B cell (primary cell): ENCODE measurements at regions of chr2 and their contacts with region 1.

Region 1: DNA sequence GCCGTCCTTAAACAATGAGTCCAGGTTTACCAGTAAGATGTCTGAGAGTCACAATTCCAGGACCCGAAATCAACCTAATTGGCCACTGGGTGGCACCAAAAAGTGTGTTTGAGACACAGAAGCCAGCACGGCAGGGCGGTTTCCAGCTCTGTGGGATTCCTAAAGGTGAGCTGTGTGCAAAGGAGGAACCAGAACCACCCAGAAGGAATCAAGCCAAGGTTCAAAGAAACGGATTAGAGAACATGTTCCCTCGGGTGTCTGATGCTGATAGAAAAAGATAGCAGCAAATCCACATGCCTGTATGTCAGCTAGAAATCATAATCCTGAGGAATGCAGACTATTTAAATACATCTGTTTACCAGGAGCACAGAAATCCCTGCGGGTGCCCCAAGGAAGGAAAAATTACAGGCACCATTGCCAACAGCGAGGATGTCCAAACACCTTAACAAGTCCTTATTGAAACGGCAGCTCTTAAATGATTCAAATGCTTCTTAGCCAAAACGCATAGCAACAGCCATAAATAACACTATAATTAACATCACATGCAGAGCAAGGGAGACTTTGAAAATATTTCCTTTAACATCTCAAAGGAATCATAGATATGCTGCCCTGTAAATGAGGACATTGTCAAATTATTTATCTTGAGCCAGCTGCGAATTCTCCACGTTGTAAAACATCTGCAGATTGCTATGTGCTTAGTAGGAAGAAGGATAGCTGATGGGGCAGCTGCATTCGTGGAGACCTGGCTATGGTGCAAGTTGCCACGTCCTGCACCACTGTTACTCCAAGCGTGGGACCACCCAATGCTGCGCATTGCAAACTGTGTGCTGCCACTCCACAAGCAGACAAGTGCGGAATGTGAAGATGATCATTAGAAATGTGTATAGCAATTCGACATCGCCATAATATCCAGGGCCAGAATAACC is 318.7 kb upstream of the NCKAP5 start:
- DNase-seq: peak; percentile 79
- ATAC-seq: peak; percentile 75
- H3K4me3 ChIP-seq: no peak overlapping the region
- H3K4me3 Mint-ChIP-seq: no peak overlapping the region
- H3K27ac ChIP-seq: no peak overlapping the region
- H3K27ac Mint-ChIP-seq: no peak overlapping the region
- H3K4me1 ChIP-seq: peaks cover 7 to 10% of the 10 kb centered on the region in 2 donors
- H3K4me1 Mint-ChIP-seq: peaks cover 13% of the 10 kb centered on the region
- H3K27me3 ChIP-seq: peaks cover 0 to 3% (median 0%) of the 10 kb centered on the region in 4 experiments
- H3K27me3 Mint-ChIP-seq: no peaks in the 10 kb centered on the region
- CTCF ChIP-seq: peak; percentile 85

Region 2: DNA sequence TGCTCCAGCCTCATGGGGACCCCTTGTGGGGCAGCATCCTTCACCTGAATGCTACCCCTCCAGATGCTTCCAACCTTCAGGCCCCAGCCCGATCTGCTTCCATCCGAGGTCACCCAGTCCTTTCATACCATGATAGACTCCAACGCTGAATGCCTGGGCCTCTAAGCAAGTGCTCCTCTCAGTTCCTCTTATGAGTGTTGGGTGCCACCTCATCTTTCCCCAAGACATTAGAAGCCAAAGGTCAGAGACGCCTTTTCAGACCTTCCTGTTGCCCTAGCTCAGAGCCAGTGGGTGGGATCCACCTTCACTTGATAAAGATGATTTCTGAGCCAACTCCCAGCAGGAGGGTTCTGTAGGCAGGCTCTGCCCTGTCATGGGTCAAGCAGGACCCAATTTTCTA is 192.4 kb after region 1 on chr2:
- CTCF ChIA-PET with region 1: interaction called, 12 read pairs
- POLR2A ChIA-PET with region 1: no interaction called
- intact Hi-C with region 1: no loop called
- DNase-seq: peak; percentile 50
- ATAC-seq: peak; percentile 94
- H3K4me3 ChIP-seq: no peak overlapping the region
- H3K4me3 Mint-ChIP-seq: no peak overlapping the region
- H3K27ac ChIP-seq: no peak overlapping the region
- H3K27ac Mint-ChIP-seq: peak overlapping the region; percentile 73
- H3K4me1 ChIP-seq: peaks cover 14 to 20% of the 10 kb centered on the region in 2 donors
- H3K4me1 Mint-ChIP-seq: peaks cover 23% of the 10 kb centered on the region
- H3K27me3 ChIP-seq: no peaks in the 10 kb centered on the region
- H3K27me3 Mint-ChIP-seq: no peaks in the 10 kb centered on the region
- CTCF ChIP-seq: no peak

Region 3: DNA sequence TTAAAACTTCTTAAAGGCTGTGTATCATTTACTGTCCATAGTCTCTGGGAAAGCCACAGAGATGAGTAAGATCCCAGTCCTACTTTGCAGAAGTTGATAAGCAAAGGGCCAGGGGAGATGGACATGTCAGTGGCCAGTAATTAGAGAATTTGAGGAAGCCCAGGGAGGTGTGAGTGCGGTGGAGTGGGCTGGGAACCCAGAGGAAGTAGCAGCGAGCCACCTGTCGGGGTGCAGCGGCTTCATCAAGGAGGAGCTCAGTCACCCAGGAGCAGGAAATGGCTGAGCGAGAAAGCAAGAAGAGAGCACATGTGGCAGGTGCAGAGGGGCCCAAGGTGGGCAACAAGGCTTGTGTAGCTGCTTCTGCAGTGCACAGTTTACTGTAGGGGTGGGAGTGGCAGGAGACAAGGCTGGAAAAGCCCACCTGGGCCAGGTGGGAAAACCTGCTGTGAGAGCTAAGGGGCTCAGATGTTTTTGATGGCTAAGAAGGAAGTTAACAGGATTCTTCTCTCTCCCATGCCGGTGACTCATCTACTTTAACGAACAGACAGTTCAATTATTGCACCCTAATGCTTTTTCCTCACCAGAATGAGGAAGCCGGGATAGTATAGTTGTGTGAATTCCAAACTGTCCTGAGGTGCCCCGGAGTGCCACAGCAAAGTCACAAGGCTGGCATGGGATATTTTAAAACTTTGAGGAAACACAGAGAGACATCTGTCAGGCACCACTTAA is 332.1 kb after region 1 on chr2:
- CTCF ChIA-PET with region 1: interaction called, 18 read pairs
- POLR2A ChIA-PET with region 1: no interaction called
- intact Hi-C with region 1: no loop called
- DNase-seq: peak; percentile 76
- ATAC-seq: peak; percentile 60
- H3K4me3 ChIP-seq: peak overlapping the region in 2 of 5 experiments; percentile 18 to 21
- H3K4me3 Mint-ChIP-seq: peak overlapping the region; percentile 67
- H3K27ac ChIP-seq: peak overlapping the region; percentile 74 to 84
- H3K27ac Mint-ChIP-seq: peak overlapping the region; percentile 91
- H3K4me1 ChIP-seq: peaks cover 52 to 55% of the 10 kb centered on the region in 2 donors
- H3K4me1 Mint-ChIP-seq: peaks cover 77% of the 10 kb centered on the region
- H3K27me3 ChIP-seq: no peaks in the 10 kb centered on the region
- H3K27me3 Mint-ChIP-seq: no peaks in the 10 kb centered on the region
- CTCF ChIP-seq: no peak

Region 4: DNA sequence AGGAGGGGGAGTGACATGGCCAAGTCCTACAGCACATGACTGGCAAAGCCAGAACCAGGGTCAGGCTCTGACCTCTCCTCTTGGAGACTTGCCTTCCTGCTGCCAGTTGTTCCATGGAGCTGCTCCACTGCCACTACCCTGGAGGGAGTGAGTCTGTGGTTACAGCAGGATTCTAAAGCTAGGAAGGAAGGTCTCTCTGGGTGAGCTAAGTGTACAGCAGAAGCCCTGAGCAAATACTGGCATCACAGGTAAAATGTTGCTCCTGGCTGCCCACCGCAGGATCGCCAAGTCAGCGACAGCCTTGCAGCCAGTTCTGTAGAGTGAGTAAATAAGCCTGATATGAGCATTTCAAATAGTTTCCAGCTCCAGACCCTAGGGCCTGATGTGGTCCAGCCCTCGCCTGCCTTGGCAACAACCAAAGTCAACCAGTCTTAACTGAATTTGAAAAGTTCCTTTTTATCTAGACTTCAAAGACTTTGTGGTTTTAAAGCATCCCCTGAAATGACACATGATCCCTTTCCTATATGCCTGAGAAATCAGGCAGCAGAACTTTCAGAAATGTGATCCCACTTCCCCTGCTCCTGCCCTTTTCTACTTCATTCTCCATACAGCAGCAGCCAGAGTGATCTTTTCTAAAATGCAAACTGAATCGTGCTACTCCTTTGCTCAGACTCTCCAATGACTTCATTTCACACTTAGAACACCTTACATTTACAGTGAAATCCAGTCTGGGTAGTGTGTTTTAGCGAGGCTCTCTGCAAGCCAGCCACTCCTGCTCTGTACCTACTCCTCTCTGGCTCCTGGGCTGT is 481.2 kb after region 1 on chr2:
- CTCF ChIA-PET with region 1: interaction called, 12 read pairs
- POLR2A ChIA-PET with region 1: no interaction called
- intact Hi-C with region 1: no loop called
- DNase-seq: no peak
- ATAC-seq: no peak
- H3K4me3 ChIP-seq: no peak overlapping the region
- H3K4me3 Mint-ChIP-seq: no peak overlapping the region
- H3K27ac ChIP-seq: peak overlapping the region in 1 of 2 donors; percentile 28
- H3K27ac Mint-ChIP-seq: peak overlapping the region; percentile 75
- H3K4me1 ChIP-seq: peaks cover 19 to 27% of the 10 kb centered on the region in 2 donors
- H3K4me1 Mint-ChIP-seq: peaks cover 37% of the 10 kb centered on the region
- H3K27me3 ChIP-seq: no peaks in the 10 kb centered on the region
- H3K27me3 Mint-ChIP-seq: no peaks in the 10 kb centered on the region
- CTCF ChIP-seq: no peak

Region 5: GRCh38 chr2:134431838-134432434 is 544.9 kb after region 1 on chr2:
- CTCF ChIA-PET with region 1: interaction called, 8 read pairs
- POLR2A ChIA-PET with region 1: interaction called, 10 read pairs
- intact Hi-C with region 1: no loop called
- DNase-seq: no peak
- ATAC-seq: no peak
- H3K4me3 ChIP-seq: no peak overlapping the region
- H3K4me3 Mint-ChIP-seq: no peak overlapping the region
- H3K27ac ChIP-seq: no peak overlapping the region
- H3K27ac Mint-ChIP-seq: peak overlapping the region; percentile 28
- H3K4me1 ChIP-seq: no peaks in the 10 kb centered on the region
- H3K4me1 Mint-ChIP-seq: no peaks in the 10 kb centered on the region
- H3K27me3 ChIP-seq: no peaks in the 10 kb centered on the region
- H3K27me3 Mint-ChIP-seq: no peaks in the 10 kb centered on the region
- CTCF ChIP-seq: no peak

Region 6: GRCh38 chr2:134897932-134898331 is 1010.9 kb after region 1 on chr2:
- CTCF ChIA-PET with region 1: interaction called, 3 read pairs
- POLR2A ChIA-PET with region 1: no interaction called
- intact Hi-C with region 1: loop called (anchors 5 kb)
- DNase-seq: peak; percentile 24
- ATAC-seq: no peak
- H3K4me3 ChIP-seq: no peak overlapping the region
- H3K4me3 Mint-ChIP-seq: no peak overlapping the region
- H3K27ac ChIP-seq: no peak overlapping the region
- H3K27ac Mint-ChIP-seq: no peak overlapping the region
- H3K4me1 ChIP-seq: no peaks in the 10 kb centered on the region
- H3K4me1 Mint-ChIP-seq: no peaks in the 10 kb centered on the region
- H3K27me3 ChIP-seq: no peaks in the 10 kb centered on the region
- H3K27me3 Mint-ChIP-seq: no peaks in the 10 kb centered on the region
- CTCF ChIP-seq: peak; percentile 84